HAP-1 (cell line): ENCODE measurements at regions of chr21 and their contacts with region 1.

Region 1: DNA sequence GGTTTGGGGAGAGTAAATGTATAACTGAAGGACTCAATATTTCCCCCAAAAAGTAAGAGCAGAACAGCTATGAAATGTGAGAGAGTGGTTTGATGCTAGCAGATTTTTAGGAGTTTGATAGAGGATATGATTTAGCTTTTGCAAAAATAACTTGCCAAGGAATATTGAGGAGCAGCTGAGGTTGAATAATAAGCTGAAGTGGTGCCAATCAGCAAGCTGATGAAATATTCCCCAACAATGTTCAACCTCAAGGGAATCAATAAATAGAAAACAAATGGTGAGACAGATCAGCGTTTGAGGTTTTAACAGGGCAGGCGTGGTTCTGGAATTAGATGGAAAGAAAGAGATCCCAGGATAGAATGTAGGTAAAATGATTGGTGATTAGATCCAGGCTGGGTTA is 413.4 kb upstream of the ADAMTS5 start:
- DNase-seq: no peak
- H3K4me3 ChIP-seq: no peak overlapping the region
- H3K4me1 ChIP-seq: no peaks in the 10 kb centered on the region
- H3K27me3 ChIP-seq: no peaks in the 10 kb centered on the region

Region 2: DNA sequence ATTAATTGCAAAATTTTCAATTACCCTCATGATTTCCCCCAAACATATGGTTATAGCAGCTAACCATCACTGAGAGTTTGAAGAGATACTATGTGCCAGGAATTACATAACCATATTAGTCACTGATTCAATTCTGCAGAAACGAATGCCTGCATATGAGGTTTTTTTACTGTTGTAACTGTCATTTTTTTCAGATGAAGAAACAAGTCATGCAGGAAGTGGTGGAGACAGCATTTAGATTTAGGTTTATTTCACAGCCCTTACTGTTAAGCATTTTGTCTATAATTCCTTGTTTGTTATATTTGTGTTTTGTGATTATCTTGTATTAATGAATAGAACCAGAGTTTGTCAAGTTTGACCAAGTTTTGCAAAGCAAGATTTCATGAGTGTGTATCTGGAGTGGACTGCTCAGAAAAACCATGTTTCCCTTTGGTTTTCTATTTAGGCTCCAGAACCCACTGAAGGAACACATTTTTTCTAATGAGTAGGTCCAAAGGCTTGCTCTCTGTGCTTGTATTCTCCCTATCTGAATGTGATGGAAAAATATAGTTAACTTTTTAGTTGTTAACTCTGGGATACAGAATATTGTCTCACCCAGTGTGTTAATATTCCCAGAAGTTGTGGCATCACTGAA is 104.9 kb before region 1 on chr21:
- in situ Hi-C with region 1: loop called (anchors 25 kb)
- DNase-seq: no peak
- H3K4me3 ChIP-seq: no peak overlapping the region
- H3K4me1 ChIP-seq: no peaks in the 10 kb centered on the region
- H3K27me3 ChIP-seq: no peaks in the 10 kb centered on the region

Region 3: DNA sequence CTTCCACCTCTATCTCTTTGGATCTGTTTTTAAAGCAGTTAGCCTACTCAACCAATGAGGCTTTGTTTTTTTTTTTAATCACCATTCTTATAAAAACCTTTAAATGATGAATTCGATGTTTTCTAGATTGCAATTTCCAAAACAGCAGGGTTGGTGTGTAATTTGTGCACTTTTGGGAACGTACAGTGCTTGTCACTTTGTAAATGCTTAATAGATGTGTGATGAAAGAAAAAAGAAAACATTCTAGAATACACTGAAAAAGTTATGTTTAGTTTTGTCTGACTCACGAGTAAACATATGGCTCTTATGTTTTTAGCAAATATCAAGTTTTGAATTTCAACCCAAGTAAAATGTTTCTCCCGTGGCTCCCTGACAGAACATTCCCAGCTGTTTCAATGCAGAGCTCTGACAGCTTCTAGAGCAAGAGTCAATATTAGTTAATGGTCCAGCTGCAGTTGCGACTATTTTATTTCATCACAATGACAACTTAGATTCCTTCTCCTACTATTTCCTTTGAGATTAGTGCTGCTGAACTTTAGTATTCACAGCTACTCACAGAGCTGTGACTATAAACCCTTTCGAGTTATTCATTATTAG is 51.0 kb before region 1 on chr21:
- in situ Hi-C with region 1: no loop called
- DNase-seq: no peak
- H3K4me3 ChIP-seq: no peak overlapping the region
- H3K4me1 ChIP-seq: no peaks in the 10 kb centered on the region
- H3K27me3 ChIP-seq: no peaks in the 10 kb centered on the region

Region 4: GRCh38 chr21:27722095-27722494 is 341.8 kb after region 1 on chr21:
- in situ Hi-C with region 1: no loop called
- DNase-seq: no peak
- H3K4me3 ChIP-seq: no peak overlapping the region
- H3K4me1 ChIP-seq: no peaks in the 10 kb centered on the region
- H3K27me3 ChIP-seq: no peaks in the 10 kb centered on the region